ENCODE measurements at regions of chr7 and their contacts with region 1.

Region 1: GRCh38 chr7:7542251-7542835 is 6.7 kb upstream of the COL28A1 start:
- DNase-seq: no peak
- H3K4me3 ChIP-seq: no peak overlapping the region
- H3K27ac ChIP-seq: no peak overlapping the region
- H3K4me1 ChIP-seq: no peaks in the 10 kb centered on the region
- H3K27me3 ChIP-seq: no peaks in the 10 kb centered on the region
- CTCF ChIP-seq: no peak
- EP300 ChIP-seq: no peak
- POLR2A ChIP-seq: no peak

Region 2: GRCh38 chr7:7103343-7104313 is 438.7 kb before region 1 on chr7:
- intact Hi-C with region 1: loop called (anchors 5 kb)
- DNase-seq: no peak
- H3K4me3 ChIP-seq: no peak overlapping the region
- H3K27ac ChIP-seq: no peak overlapping the region
- H3K4me1 ChIP-seq: peaks cover 0 to 13% (median 7%) of the 10 kb centered on the region in 4 donors
- H3K27me3 ChIP-seq: no peaks in the 10 kb centered on the region
- CTCF ChIP-seq: peak in 3 of 4 experiments; percentile 37 to 57 (median 50)
- EP300 ChIP-seq: no peak
- POLR2A ChIP-seq: no peak

Region 3: GRCh38 chr7:7424151-7424873 is 118.0 kb before region 1 on chr7:
- intact Hi-C with region 1: loop called (anchors 2 kb)
- DNase-seq: peak; percentile 71
- H3K4me3 ChIP-seq: peak overlapping the region; percentile 18 to 53 (median 44)
- H3K27ac ChIP-seq: peak overlapping the region in 1 of 4 donors; percentile 30
- H3K4me1 ChIP-seq: no peaks in the 10 kb centered on the region
- H3K27me3 ChIP-seq: no peaks in the 10 kb centered on the region
- CTCF ChIP-seq: peak; percentile 54 to 67 (median 62)
- EP300 ChIP-seq: no peak
- POLR2A ChIP-seq: no peak

Measured in sigmoid colon (tissue), 7 donors.